SK-N-SH (cell line): ENCODE measurements at regions of chr7 and their contacts with region 1.

Region 1: DNA sequence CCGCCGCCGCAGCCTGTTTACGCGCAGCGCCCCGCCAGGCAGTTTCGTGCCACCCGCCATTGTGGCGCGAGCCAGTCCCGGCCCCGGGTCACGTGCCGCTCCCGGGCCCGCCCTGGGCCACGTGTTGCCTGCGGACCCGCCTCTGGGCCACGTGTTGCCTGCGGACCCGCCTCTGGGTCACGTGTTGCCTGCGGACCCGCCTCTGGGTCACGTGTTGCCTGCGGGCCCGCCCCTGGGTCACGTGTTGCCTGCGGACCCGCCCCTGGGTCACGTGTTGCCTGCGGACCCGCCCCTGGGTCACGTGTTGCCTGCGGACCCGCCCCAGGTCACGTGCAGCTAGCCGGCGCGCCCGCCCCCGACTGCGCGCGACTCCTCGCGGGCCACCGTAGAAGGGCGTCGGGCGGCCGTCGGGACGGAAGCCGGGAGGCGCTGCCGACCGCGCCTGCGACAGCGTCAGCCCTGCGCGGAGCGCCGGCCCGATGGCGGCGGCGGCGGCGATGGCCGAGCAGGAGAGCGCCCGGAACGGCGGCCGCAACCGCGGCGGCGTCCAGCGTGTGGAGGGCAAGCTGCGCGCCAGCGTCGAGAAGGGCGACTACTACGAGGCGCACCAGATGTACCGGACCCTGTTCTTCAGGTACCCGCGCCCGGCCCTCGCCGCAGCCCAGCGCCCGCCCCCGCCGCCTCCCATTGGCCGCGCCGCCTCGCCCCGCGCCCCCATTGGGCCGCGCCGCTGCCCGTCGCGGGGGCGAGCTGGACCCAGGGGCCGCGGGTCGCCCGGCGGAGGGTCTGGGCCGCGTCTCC is at the start of gene GET4:
- DNase-seq: peak; percentile 98
- H3K4me3 ChIP-seq: peak within 1 kb of the TSS; percentile 57 to 89
- H3K27ac ChIP-seq: peak within 1 kb of the TSS; percentile 61 to 87
- H3K4me1 ChIP-seq: peaks cover 11 to 29% of the 10 kb centered on the region in 2 experiments; a peak in 2 of 4 replicates
- H3K27me3 ChIP-seq: no peaks in the 10 kb centered on the region
- CTCF ChIP-seq: no peak
- EP300 ChIP-seq: 0 out of 4 replicates have a peak, but pooled peaks of 1 of the 2 experiments have one; percentile 17
- RAD21 ChIP-seq: no peak
- polyA plus RNA-seq, gene GET4: 63.1 and 65.4 TPM in 2 replicates

Region 2: DNA sequence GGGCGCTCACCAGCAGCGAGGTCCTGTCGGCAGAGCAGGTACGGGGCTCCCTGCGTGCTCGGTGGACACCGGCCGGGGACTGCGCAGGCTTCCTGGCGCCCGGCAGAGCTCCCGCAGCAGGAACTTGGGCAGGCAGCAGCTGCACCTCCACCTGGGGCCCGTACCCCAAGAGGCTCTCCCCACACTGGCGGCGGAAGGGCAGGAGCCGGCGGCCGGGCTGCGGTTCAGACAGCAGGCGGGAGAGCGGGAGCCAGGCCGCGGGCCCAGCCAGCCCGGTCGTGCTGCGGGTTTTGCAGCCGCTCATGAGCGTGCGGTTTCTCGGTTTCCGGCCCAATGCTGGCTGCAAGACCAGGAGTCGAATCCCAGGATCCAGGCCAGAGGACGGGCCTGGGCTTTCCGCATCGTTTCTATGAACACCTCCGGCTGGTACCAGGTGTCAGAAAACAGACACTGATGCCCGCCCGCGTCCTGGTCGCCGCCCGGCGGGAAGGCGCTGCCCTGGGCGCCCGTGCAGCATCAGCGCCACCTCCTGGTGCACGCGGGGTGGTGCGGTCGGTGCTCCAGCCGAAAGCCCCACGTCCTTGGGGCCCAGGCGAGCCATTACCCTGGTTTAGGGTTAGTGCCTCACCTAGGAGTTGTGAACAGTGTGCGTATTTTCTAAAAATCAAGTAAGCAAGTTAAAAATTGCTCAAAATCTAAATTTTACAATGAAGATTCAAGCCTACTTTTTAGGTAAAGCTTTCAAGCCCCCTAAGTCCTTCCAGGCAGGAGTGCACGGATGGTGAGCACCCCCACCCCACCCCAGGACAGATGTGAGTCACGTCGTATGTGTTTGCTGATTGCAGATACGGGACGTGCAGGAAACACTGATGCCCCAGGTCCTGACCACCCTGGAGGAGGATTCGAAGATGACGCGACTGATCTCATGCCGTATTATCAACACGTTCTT is 101.9 kb before region 1 on chr7:
- CTCF ChIA-PET with region 1: interaction called, 28 read pairs
- POLR2A ChIA-PET with region 1: no interaction called
- DNase-seq: peak; percentile 93
- H3K4me3 ChIP-seq: no peak overlapping the region
- H3K27ac ChIP-seq: no peak overlapping the region
- H3K4me1 ChIP-seq: peaks cover 40 to 48% of the 10 kb centered on the region in 2 experiments
- H3K27me3 ChIP-seq: no peaks in the 10 kb centered on the region
- CTCF ChIP-seq: peak; percentile 99
- EP300 ChIP-seq: no peak
- RAD21 ChIP-seq: peak; percentile 81

Region 3: DNA sequence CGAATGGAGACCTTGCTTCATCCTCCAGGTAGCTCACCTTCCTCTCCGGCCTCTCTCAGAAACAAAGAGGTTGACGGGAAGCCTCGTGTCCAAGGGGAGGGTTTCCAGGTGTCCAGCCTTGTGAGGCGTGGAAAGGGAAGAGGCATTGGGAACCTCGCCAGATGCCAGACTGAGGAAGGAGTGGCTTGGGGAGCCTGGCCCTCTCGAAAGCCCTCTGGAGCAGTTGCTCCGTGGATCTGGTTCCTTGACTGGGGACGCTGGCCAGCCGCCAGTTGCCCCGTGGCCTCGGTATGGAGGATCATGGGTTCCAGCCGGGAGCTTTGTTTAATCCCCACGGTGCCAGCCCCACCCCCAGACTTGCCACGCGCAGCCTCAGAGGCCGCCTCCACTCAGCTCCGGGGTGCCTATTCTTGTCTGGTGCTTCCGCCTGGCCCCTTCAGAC is 74.4 kb before region 1 on chr7:
- CTCF ChIA-PET with region 1: interaction called, 21 read pairs
- POLR2A ChIA-PET with region 1: no interaction called
- DNase-seq: peak; percentile 72
- H3K4me3 ChIP-seq: no peak overlapping the region
- H3K27ac ChIP-seq: no peak overlapping the region; a peak in 1 of 4 replicates
- H3K4me1 ChIP-seq: peaks cover 0 to 4% of the 10 kb centered on the region in 2 experiments; a peak in 1 of 4 replicates
- H3K27me3 ChIP-seq: no peaks in the 10 kb centered on the region
- CTCF ChIP-seq: no peak
- EP300 ChIP-seq: no peak
- RAD21 ChIP-seq: no peak

Region 4: GRCh38 chr7:821688-822087 is 54.7 kb before region 1 on chr7:
- CTCF ChIA-PET with region 1: interaction called, 31 read pairs
- POLR2A ChIA-PET with region 1: interaction called, 4 read pairs
- DNase-seq: peak; percentile 66
- H3K4me3 ChIP-seq: no peak overlapping the region
- H3K27ac ChIP-seq: peak overlapping the region in 1 of 2 experiments; percentile 62; a peak in 2 of 4 replicates
- H3K4me1 ChIP-seq: peaks cover 31 to 42% of the 10 kb centered on the region in 2 experiments; a peak in 3 of 4 replicates
- H3K27me3 ChIP-seq: no peaks in the 10 kb centered on the region
- CTCF ChIP-seq: no peak
- EP300 ChIP-seq: no peak
- RAD21 ChIP-seq: peak; percentile 69

Region 5: DNA sequence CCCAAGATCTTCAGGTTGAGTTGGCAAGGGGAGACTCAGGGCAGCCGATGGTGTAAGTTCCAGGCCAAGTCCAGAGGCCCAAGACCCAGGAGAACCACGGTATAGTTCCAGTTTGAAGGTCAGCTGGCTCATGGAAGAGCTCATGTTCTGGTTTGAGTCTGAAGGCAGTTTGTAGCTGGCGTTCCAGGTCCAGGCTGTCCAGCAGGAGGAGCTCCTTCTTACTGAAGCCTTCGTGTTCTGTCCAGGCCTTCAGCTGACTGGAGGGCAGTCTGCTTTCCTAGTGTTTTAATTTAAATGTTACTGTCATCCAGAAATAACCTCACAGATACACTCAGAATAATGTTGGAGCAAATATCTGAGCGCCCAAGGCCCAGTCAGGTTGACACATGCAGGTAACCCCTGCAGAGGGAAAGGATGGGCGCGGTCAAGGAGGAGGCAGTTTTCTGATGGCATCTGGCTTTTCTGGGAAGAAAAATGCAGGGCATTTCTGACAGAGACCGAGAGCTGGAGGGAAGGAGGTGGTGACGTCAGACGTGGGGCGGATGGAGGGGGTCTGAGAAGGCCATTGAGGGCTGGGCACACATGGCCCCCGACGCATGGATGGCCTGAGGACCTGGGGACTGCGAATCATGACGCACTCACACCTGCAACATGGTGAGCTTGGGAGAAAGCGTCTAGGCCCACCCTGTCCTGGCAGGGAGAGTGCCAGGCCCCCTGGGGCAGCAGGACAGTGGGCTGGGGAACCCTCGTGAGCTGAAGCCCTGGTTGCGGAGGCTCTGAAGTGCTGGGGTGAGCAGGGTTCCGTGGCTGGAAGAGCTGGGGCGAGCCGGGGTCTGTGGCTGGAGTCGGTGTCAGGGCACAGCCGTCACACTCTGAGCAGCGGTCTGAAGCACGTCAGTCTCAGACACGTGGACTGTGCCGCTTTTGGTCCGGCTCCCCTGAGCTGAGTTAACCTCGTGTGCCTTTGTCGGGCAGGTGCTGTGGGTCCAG is 39.7 kb before region 1 on chr7:
- CTCF ChIA-PET with region 1: interaction called, 112 read pairs
- POLR2A ChIA-PET with region 1: no interaction called
- DNase-seq: peak; percentile 65
- H3K4me3 ChIP-seq: no peak overlapping the region
- H3K27ac ChIP-seq: no peak overlapping the region; a peak in 1 of 4 replicates
- H3K4me1 ChIP-seq: peaks cover 10 to 15% of the 10 kb centered on the region in 2 experiments; a peak in 3 of 4 replicates
- H3K27me3 ChIP-seq: no peaks in the 10 kb centered on the region
- CTCF ChIP-seq: peak; percentile 63
- EP300 ChIP-seq: no peak
- RAD21 ChIP-seq: peak; percentile 63

Region 6: DNA sequence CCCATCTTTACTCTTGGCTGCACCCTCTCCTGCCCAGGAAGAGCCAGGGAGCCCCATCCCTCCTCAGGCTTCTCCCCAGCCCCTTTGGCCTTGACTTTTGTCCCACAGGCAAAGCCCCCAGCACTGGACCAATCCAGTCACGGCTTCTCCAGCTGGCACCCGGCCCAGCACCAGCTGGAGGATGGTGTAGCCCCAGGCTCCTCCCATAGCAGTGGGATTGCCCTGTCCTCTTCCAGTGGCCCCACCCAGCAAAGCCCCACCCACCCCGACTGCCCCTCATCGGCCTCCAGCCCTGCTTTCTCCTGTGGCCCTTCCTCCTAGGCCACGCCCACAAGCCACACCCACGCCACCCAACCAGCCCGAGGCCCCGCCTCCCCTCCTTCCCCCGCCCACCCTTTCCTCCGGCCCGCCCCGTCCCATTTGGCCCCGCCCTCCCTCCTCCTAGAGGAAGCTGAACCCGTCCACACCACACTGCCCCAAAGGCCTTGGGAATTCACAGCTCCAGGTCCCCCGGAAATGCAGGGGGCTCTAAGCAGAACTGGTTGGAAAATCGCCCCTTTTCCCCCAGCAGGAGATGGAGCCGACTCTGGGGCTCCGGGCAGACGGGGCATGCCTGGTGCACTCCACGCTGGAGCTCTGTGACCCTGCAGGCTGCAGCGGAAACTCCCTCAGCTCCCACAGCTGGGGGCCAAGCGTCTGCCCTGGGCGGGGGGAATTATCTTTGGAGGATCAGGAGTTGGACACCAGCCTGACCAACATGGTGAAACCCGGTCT is 25.2 kb after region 1 on chr7:
- CTCF ChIA-PET with region 1: interaction called, 10 read pairs
- POLR2A ChIA-PET with region 1: interaction called, 3 read pairs
- DNase-seq: peak; percentile 100
- H3K4me3 ChIP-seq: peak overlapping the region in 1 of 2 experiments; percentile 25; a peak in 1 of 4 replicates
- H3K27ac ChIP-seq: peak overlapping the region in 1 of 2 experiments; percentile 39; a peak in 1 of 4 replicates
- H3K4me1 ChIP-seq: peaks cover 14 to 19% of the 10 kb centered on the region in 2 experiments; a peak in 3 of 4 replicates
- H3K27me3 ChIP-seq: no peaks in the 10 kb centered on the region
- CTCF ChIP-seq: no peak
- EP300 ChIP-seq: no peak
- RAD21 ChIP-seq: no peak